Aorta (tissue), 5 donors: ENCODE measurements at regions of chr4 and their contacts with region 1.

Region 1: DNA sequence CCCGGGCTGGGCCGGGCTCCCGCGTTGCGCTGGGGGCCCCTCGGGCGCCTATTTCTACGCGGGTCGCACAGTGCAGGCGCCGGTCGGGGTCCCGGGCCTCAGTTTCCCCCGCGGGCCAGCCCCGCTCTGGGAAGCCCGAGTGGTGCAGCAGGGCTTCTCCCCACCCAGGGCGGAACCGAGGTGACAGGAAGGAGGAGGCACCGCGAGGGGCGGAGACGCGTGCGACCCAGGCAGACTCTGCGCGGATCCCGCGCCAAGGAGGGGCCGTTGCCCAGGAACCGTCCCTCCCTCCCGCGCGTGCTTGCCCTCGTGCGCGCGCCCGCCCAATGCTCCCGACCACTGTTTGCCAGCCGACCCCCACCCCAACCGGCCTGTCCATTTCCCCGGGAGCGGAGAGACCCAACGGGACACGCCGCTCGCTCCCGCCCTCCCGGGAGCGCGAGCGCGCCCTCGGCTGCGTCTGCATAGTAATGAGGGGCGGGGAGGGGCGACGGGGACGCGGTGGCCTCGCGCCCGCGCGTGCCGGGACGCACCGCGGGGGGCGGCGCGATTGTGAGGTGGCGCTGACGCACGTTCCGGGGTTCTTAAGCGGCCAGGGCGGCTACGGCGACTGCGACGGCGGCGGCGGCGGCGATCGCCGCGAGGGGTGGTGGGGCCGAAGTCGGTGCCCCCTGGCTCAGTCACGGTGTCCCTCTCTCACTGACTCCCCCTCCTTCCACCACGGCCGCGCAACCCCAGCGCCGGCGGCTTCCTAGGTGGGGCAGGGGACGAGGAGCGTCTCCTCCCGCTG is at the start of gene CPEB2:
- DNase-seq: peak; percentile 96 to 98
- ATAC-seq: peak; percentile 93
- H3K4me3 ChIP-seq: peak within 1 kb of the TSS; percentile 98 to 99
- H3K27ac ChIP-seq: peak within 1 kb of the TSS; percentile 97 to 100
- H3K4me1 ChIP-seq: no peaks in the 10 kb centered on the region
- H3K27me3 ChIP-seq: no peaks in the 10 kb centered on the region
- total RNA-seq, gene CPEB2: 28.0 to 57.0 TPM

Region 2: DNA sequence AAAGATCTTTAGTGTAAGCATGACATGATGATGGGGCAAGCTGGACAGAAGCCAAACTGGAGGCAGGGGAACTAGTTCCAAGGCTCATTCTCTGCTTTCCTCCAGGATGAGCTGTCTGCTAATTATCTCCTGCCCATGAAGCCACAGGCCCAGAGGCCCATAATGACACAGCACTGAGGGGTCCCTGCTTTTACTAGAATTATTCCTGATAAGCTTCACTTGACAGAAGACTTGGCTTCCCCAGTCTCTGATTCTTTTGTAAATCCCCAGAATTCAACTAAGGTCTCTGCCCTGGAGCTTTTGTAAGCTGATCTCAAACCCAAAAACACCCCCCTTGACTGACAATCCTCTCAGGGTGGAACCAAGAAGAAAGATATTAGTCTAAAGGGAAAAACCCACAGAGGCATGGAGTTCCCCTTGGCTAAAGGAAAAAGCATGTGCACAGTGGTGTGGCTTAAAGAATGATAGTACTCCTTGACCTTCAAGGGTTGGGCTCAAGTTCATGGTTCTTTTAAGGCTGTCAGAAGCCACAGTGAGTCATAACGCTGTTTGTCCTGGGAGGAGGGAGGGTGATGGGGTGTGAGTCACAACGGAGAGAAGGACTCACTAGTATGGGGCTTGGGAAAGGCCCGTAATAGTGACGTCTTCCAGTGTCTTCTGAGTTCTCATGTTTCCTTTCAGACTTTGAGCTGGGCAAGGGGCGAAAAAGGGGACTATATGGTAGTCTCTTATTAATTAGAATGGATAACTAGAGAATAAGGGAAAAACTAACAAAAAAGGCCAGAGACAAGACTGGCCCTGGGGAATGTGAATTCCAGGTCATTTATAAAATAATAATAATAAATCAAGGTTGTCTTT is 145.8 kb before region 1 on chr4:
- intact Hi-C with region 1: loop called in 1 of 2 experiments (anchors 10 kb)
- DNase-seq: peak; percentile 78 to 84
- ATAC-seq: peak; percentile 80
- H3K4me3 ChIP-seq: no peak overlapping the region
- H3K27ac ChIP-seq: peak overlapping the region in 1 of 2 donors; percentile 56
- H3K4me1 ChIP-seq: peaks cover 2 to 3% of the 10 kb centered on the region in 2 donors
- H3K27me3 ChIP-seq: no peaks in the 10 kb centered on the region

Region 3: DNA sequence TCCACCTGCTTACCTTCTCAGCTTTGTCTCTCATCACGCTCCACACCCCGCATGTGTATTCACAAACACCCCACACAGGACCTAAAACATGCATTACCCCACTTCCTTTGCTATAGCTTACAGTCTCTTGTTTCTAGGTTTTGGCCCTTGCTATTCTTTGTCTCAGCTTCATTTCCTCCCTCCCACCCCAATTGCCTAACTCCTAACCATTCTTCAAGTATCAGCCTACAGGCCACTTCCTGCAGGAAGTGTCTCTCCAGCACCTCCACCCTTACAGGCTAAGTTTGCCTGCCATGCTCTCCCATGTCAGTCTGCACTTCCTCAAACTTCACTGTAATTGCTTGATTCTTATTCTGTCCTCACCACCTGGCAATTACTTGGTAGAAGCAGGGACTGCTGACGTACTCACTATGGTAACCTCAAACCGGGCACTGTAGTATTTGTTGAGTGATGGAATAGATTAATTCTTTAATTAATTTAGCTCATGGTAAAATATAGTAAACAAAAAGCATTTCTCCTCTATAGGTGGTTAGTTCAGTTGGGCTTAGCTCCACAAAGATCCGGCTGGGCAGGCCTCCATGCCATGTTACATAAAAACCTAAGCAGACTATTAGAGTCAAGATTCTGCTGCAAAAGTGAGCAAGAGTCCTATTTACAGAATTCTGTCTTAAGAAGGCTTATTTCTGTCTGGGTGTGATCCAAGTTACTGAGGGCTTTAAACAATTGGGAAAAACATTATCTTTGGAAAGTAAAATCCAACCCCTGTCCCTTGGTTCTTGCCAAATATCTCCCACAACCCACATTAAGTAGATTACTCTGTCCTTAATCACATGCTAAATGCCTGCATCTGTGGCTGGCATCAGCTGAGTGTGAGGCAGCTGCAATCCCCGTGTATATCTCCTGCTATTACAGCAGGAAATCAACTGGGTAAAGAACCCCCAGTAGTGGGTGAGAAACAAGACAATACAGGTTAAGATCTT is 124.5 kb before region 1 on chr4:
- intact Hi-C with region 1: no loop called
- DNase-seq: no peak
- ATAC-seq: peak; percentile 48
- H3K4me3 ChIP-seq: no peak overlapping the region
- H3K27ac ChIP-seq: no peak overlapping the region
- H3K4me1 ChIP-seq: no peaks in the 10 kb centered on the region
- H3K27me3 ChIP-seq: no peaks in the 10 kb centered on the region

Region 4: GRCh38 chr4:14934704-14935390 is 67.2 kb before region 1 on chr4:
- intact Hi-C with region 1: no loop called
- DNase-seq: no peak
- ATAC-seq: no peak
- H3K4me3 ChIP-seq: no peak overlapping the region
- H3K27ac ChIP-seq: no peak overlapping the region
- H3K4me1 ChIP-seq: no peaks in the 10 kb centered on the region
- H3K27me3 ChIP-seq: no peaks in the 10 kb centered on the region

Region 5: DNA sequence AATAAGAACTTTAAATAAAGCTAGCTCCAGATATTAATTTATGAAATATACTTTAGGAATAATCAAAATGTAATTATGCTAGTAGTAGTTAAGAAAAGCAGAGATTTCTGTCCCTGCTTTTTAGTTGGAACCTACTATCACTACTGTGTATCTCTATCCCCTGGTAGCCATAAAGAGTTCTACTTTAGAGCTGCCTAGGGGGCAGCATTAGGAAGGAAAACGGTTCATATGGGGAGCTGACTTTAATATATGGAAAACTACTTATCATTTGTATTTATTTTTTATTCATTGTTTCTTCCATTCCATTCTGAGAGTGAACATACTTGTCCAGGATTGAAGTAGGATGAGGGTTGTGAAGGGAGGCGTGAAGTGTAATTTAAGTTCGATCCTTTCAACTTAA is 41.2 kb after region 1 on chr4:
- intact Hi-C with region 1: loop called in 1 of 2 experiments (anchors 5 kb)
- DNase-seq: no peak
- ATAC-seq: no peak
- H3K4me3 ChIP-seq: no peak overlapping the region
- H3K27ac ChIP-seq: no peak overlapping the region
- H3K4me1 ChIP-seq: peaks cover 0 to 3% of the 10 kb centered on the region in 2 donors
- H3K27me3 ChIP-seq: no peaks in the 10 kb centered on the region

Region 6: DNA sequence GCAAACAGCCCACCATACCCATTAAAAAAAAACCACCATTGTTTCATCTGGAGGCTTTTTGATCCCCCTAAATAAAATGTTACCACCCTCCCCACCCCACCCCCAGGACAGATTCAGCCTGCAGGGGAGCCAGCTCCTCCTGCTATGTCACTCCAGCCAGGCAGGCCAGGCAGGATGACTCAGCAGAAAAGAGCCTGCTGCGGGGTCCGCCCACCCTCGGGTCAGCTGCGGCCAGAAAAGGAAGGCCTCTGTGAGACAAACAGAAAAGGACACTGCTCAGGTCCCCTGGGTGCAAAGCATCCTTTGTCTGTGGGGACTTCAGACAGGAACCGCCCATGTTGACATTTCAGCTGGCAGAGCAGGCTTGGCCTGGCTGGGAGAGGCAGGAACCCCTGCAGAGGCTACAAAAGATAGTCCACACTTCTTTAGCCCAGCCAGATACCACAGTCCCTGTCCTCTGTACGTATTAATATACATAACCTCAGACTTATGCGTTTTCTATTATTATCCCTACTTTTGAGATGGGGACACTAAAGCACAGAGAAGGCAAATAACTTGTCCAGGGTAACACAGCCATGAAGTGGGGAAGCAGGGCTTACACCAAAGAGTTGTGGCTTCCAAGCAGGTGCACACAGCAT is 147.9 kb after region 1 on chr4:
- intact Hi-C with region 1: loop called in 1 of 2 experiments (anchors 5 kb)
- DNase-seq: peak; percentile 87 to 88
- ATAC-seq: peak; percentile 93
- H3K4me3 ChIP-seq: no peak overlapping the region
- H3K27ac ChIP-seq: peak overlapping the region in 1 of 2 donors; percentile 83
- H3K4me1 ChIP-seq: peaks cover 2 to 7% of the 10 kb centered on the region in 2 donors
- H3K27me3 ChIP-seq: no peaks in the 10 kb centered on the region

Region 7: GRCh38 chr4:15420642-15421041 is 418.6 kb after region 1 on chr4:
- intact Hi-C with region 1: loop called in 1 of 2 experiments (anchors 10 kb)
- DNase-seq: no peak
- ATAC-seq: peak; percentile 73
- H3K4me3 ChIP-seq: no peak overlapping the region
- H3K27ac ChIP-seq: peak overlapping the region; percentile 49 to 67
- H3K4me1 ChIP-seq: peaks cover 9 to 22% of the 10 kb centered on the region in 2 donors
- H3K27me3 ChIP-seq: no peaks in the 10 kb centered on the region

Region 8: DNA sequence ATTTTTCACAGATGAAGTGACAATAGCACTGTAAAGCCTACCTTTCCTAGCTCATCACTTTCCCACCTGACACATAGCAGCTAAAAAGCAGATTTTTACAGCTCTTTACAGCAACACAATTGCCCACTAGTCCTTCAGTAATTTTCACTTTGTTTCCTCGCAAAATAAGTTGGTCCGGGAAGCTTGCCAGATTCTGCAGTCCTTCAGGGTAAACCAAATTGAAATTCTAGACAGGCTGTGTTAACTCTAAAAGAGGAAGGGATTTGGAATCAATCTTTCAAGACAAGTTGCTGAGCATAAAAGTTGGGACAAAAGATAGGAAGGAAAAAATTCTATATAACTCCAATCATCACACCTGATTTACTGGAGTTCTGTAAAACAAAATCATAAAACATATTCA is 434.4 kb after region 1 on chr4:
- intact Hi-C with region 1: loop called in 1 of 2 experiments (anchors 10 kb)
- DNase-seq: peak in 1 of 2 donors; percentile 63
- ATAC-seq: no peak
- H3K4me3 ChIP-seq: no peak overlapping the region
- H3K27ac ChIP-seq: no peak overlapping the region
- H3K4me1 ChIP-seq: peaks cover 10% of the 10 kb centered on the region in 2 donors
- H3K27me3 ChIP-seq: no peaks in the 10 kb centered on the region

Region 9: DNA sequence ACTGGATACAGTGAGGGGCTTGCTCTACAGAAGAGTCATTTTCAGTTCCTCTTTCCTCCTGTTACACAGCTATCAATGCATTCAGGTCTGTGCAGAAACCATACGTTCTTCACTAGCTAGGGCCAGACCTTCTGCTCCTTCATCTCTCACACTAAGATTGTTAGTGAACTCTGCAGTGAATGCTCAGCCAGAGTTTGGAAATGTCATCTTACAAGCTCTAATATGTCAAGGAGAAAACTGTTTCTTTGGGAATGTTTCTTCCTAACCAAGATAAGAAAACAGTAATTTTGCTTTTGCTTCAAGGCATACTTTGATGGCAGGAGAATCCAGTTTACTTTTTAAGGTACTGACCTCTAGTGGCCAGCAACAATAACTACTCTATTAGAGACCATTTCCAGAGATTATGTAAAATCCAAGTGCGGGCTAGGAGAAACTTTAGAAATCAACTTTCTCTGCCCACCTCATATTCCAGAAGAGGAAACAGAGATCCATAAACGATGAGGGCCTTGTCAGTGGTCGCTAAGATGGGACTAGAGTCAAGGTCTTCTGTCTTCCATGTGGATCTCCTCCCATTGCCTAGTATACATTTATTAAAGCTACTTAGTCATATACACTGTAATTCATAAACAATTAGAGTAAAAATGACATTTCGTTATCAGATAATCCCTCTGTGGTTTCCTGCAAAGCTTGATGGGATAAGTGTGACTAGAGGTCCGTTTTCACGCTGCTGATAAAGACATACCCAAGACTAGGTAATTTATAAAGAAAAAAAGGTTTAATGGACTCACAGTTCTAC is 455.5 kb after region 1 on chr4:
- intact Hi-C with region 1: loop called in 1 of 2 experiments (anchors 5 kb)
- DNase-seq: no peak
- ATAC-seq: peak; percentile 77
- H3K4me3 ChIP-seq: no peak overlapping the region
- H3K27ac ChIP-seq: peak overlapping the region; percentile 57 to 71
- H3K4me1 ChIP-seq: peaks cover 6 to 28% of the 10 kb centered on the region in 2 donors
- H3K27me3 ChIP-seq: no peaks in the 10 kb centered on the region